CD4-positive, alpha-beta T cell (primary cell): ENCODE measurements at regions of chr15 and their contacts with region 1.

Region 1: DNA sequence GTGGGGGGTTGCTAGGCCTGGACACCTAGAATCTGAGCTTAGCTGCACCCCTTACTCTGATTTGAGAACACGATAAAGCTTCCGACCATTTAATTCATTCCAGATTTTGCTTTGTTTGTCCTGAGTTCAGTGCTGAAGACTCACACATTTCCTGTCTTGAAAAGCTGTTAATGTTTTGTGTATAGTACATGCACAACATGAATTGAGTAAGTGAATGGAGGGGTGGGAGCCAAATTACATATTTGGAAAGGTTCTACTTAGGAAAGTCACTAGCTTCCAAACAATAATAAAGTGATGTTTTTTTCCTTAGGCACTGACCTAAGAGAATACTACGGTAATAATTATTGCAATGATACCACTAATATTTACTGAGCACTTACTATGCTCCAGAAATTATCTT is 955.2 kb upstream of the NR2F2 start:
- DNase-seq: no peak
- ATAC-seq: no peak
- H3K4me3 ChIP-seq: no peak overlapping the region
- H3K4me3 Mint-ChIP-seq: no peak overlapping the region
- H3K27ac ChIP-seq: no peak overlapping the region
- H3K27ac Mint-ChIP-seq: no peak overlapping the region
- H3K4me1 ChIP-seq: no peaks in the 10 kb centered on the region
- H3K4me1 Mint-ChIP-seq: no peaks in the 10 kb centered on the region
- H3K27me3 ChIP-seq: no peaks in the 10 kb centered on the region
- H3K27me3 Mint-ChIP-seq: no peaks in the 10 kb centered on the region
- CTCF ChIP-seq: no peak

Region 2: GRCh38 chr15:95341686-95342085 is 33.6 kb before region 1 on chr15:
- CTCF ChIA-PET with region 1: no interaction called
- POLR2A ChIA-PET with region 1: no interaction called
- intact Hi-C with region 1: loop called in 1 of 2 experiments (anchors 5 kb)
- DNase-seq: no peak
- ATAC-seq: no peak
- H3K4me3 ChIP-seq: no peak overlapping the region
- H3K4me3 Mint-ChIP-seq: no peak overlapping the region
- H3K27ac ChIP-seq: no peak overlapping the region
- H3K27ac Mint-ChIP-seq: no peak overlapping the region
- H3K4me1 ChIP-seq: no peaks in the 10 kb centered on the region
- H3K4me1 Mint-ChIP-seq: no peaks in the 10 kb centered on the region
- H3K27me3 ChIP-seq: no peaks in the 10 kb centered on the region
- H3K27me3 Mint-ChIP-seq: peaks cover 19% of the 10 kb centered on the region
- CTCF ChIP-seq: no peak

Region 3: GRCh38 chr15:95492388-95493070 is 117.2 kb after region 1 on chr15:
- CTCF ChIA-PET with region 1: no interaction called
- POLR2A ChIA-PET with region 1: no interaction called
- intact Hi-C with region 1: no loop called
- DNase-seq: no peak
- ATAC-seq: no peak
- H3K4me3 ChIP-seq: no peak overlapping the region
- H3K4me3 Mint-ChIP-seq: no peak overlapping the region
- H3K27ac ChIP-seq: no peak overlapping the region
- H3K27ac Mint-ChIP-seq: no peak overlapping the region
- H3K4me1 ChIP-seq: no peaks in the 10 kb centered on the region
- H3K4me1 Mint-ChIP-seq: no peaks in the 10 kb centered on the region
- H3K27me3 ChIP-seq: peaks cover 0 to 2% of the 10 kb centered on the region in 2 experiments
- H3K27me3 Mint-ChIP-seq: peaks cover 27% of the 10 kb centered on the region
- CTCF ChIP-seq: no peak